AG04449 (cell line): ENCODE measurements at regions of chr6 and their contacts with region 1.

Region 1: DNA sequence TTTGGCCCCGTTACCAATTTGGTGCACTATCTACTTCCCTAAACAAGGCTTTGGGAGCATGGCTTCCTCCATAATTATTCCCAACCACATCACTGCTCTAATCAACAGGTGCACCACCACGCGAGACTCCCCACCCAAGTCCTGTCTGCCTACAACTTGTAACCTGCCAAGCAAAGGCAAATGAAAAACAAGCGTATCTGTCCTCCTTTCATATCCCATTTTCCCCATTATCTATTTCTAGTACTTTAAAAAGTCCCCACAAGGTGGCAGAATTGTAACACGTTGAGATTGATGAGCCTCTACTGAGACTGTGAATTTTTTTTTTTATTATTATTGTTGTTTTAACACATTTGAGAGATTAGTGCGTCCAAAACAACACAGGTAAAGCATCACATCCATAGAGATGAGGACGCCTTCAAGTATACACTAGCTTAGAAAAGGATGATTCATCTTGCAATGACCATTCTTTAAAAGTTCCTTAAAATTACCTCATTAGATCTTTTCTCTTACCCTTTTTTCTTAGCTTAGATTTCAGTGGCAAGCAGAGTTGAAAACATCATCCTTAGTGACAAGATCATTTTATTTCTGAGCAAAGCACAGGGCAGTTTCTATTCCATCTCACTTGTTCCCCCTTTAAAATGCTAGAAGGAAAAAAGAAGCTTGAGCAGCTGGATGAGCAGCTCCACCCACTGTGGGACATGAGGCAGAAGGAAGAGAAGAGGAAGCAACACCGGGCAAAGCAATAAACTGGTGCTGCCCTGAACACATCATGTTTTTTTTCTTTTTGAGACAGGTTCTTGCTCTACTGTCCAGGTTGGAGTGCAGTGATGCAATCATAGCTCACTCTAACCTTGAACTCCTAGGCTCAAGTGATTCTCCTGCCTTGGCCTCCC is 210.8 kb downstream of the ARHGAP18 start:
- DNase-seq: no peak
- H3K4me3 ChIP-seq: no peak overlapping the region
- CTCF ChIP-seq: peak; percentile 22

Region 2: GRCh38 chr6:129510950-129511349 is 11.8 kb after region 1 on chr6:
- CTCF ChIA-PET with region 1: interaction called, 95 read pairs
- POLR2A ChIA-PET with region 1: no interaction called
- DNase-seq: no peak
- H3K4me3 ChIP-seq: no peak overlapping the region
- CTCF ChIP-seq: no peak

Region 3: GRCh38 chr6:129536271-129536670 is 37.1 kb after region 1 on chr6:
- CTCF ChIA-PET with region 1: interaction called, 11 read pairs
- POLR2A ChIA-PET with region 1: no interaction called
- DNase-seq: no peak
- H3K4me3 ChIP-seq: no peak overlapping the region
- CTCF ChIP-seq: no peak

Region 4: DNA sequence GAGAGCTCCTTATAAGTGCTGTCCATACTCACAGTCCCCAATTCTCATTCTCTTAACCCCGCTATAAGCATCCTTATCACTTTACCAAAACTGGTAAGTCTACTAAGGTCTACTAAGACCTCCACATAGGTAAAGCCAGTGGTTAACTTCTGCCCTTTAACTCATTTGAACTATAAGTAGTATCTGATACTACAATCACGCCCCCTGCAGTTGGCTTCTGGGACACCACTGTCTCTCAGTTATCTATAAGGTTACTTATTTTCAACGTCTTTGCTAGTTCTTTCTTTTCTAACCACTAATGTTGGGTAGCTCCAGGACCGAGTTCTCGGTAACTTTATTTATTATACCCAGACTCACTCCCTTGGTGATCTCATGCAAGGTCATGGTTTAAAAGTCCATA is 68.2 kb after region 1 on chr6:
- CTCF ChIA-PET with region 1: interaction called, 144 read pairs
- POLR2A ChIA-PET with region 1: no interaction called
- DNase-seq: no peak
- H3K4me3 ChIP-seq: no peak overlapping the region
- CTCF ChIP-seq: peak; percentile 5

Region 5: DNA sequence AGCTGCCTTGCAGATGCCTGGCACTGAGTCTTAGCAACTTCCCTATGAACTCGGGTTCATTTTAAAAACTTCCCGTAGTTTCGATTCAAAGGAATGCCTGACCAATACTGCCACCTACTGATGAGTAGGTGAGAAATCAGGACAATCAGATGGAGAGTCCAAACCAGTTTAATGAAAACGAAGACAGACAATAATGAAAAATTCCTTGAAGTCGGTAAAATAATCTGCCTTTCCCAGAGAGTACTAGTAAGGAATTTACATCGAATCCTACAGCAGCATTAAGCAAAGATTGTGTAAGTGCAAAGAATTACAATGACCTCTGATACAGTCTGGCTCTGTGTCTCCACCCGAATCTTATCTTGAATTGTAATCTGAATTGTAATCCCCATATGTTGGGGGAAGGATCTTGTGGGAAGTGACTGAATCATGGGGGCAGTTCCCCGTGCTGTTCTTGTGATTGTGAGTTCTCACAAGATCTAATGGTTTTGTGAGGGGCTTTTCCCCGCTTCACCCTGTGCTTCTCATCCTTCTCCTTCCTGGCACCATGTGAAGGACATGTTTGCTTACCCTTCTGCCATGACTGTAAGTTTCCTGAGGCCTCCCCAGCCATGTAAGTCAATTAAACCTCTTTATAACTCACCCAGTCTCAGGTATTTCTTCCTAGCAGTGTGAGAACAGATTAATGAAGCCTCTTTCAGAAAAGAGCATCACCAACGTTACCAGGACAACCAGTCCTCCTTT is 76.4 kb after region 1 on chr6:
- CTCF ChIA-PET with region 1: interaction called, 144 read pairs
- POLR2A ChIA-PET with region 1: no interaction called
- DNase-seq: peak; percentile 19
- H3K4me3 ChIP-seq: no peak overlapping the region
- CTCF ChIP-seq: peak; percentile 52

Region 6: GRCh38 chr6:129590408-129591022 is 91.3 kb after region 1 on chr6:
- CTCF ChIA-PET with region 1: interaction called, 31 read pairs
- POLR2A ChIA-PET with region 1: interaction called, 4 read pairs
- DNase-seq: peak; percentile 59
- H3K4me3 ChIP-seq: no peak overlapping the region
- CTCF ChIP-seq: no peak

Region 7: DNA sequence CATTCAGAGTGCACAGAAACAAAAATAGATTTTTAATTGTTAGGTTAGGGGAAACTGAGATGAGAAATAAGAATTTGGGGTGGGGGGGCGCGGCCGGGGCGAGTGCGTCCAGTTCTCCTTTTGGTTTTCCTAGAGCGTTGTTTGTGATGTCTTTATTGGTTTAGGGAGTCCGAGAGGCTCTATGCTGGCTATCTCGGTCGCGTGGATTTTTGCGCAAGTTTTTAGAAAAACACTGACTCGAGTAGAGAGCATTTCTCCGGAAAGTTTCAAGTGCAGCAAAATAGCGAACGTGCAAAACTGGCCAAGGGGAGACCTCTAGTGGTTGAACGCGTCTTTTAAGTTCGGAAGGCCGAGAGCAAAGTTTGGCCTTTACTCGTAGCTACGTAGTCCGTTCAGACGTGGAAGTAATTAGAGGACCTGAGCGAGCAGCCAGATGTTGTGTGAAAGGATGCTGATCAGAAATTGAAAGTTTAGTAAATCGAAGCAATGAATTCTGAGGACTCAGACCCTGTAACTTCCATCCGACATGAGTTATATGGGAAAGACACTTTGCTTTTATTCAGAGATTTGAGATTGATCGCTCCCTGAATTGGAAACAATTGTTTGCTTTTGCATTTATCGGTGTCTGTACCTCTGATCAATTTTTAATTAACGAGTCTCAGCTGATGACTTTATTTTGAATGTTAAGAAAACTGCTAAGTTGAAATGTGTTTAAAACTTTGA is 521.9 kb after region 1 on chr6:
- CTCF ChIA-PET with region 1: interaction called, 10 read pairs
- POLR2A ChIA-PET with region 1: no interaction called
- DNase-seq: peak; percentile 75
- H3K4me3 ChIP-seq: peak overlapping the region; percentile 73
- CTCF ChIP-seq: peak; percentile 82